ENCODE measurements at regions of chr12 and their contacts with region 1.

Region 1: DNA sequence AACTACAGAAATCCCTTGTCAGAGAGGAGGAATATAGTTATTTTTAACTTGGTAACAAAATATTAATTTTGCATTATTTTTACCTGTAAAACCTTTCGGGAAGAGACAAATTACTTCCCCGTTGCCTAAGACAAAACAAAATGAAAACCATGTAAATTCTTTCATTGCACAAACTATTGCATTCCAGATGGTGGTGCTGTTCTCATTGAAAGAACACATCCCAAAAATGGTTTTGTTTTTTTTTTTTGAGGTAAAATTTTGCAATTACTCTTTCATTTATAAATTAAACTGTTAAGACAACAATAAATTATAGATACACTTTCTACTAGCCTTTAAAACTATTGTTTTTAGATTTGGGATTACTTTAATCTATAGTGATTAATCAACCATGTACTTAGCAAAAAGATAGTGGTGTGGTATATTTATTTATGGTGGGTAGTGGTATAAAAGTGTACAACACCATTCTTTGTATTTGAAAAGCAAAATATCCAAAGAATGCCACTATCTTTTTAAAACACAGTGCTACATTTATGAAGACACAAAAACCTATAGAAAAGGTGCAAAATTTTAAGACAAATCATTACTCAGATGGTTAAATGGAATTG is 115.5 kb downstream of the SLC38A1 start:
- DNase-seq: no peak
- H3K4me3 ChIP-seq: peak overlapping the region in 26 of 59 donors; percentile 1 to 36 (median 16)
- H3K27ac ChIP-seq: peak overlapping the region in 40 of 59 donors; percentile 15 to 81 (median 61)
- H3K27me3 ChIP-seq: peaks cover 0 to 9% (median 0%) of the 10 kb centered on the region in 45 donors
- CTCF ChIP-seq: peak; percentile 49 to 76 (median 68)

Region 2: DNA sequence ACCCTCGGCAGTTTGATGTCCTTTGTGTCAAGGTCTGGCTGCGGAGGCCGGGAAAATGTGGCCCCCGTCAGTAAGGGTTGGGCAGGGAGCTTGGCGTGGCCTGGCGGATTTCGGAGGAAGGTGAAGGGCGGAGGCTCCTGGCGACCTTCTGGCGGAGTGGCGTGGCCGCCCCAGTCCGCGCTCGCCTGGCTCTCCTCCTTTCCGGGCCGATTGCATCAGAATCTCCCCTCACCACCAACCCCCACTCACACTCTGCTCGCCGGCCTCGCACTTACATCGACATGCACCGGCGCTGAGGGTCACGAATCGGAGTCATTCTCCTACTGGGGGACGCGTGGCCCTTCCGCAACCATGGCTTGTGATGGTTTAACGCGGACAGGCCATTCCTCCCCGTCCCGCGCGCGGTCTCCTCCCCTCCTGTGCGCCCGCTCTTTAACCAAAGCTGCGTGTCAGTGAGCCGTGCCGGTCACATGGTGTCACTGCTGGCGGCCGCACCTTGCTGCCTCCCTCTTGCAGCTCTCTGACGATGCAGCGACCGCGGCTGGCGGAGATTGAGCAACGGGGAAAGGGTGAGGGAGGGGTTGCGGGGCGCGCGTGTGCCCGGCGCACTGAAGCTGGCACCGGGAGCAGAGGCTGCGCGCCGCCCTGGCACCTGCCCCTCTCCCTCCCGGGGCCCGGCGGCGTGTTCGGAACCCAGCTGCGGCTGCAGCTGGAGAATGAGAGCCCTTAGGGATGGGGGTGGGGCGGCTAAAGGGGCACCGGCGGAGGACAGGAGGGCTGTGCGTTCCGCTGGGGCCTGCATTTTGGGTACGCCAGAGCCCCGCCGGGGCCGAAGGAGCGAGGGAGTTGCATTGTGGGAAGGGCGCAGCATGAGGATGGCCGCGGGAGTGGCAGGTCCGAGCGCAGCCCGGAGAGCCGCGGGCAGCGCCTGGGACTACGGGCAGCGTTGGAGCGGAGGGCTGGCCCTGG is 115.5 kb after region 1 on chr12 and contains the start of gene SLC38A1:
- intact Hi-C with region 1: loop called in 1 of 2 experiments (anchors 5 kb)
- DNase-seq: peak; percentile 56 to 90 (median 83)
- H3K4me3 ChIP-seq: peak within 1 kb of the TSS; percentile 53 to 89 (median 74)
- H3K27ac ChIP-seq: peak within 1 kb of the TSS in 58 of 59 donors; percentile 47 to 95 (median 84)
- H3K27me3 ChIP-seq: peaks cover 0 to 23% (median 0%) of the 10 kb centered on the region in 45 donors
- CTCF ChIP-seq: peak in 2 of 56 donors; percentile 7 to 27
- total RNA-seq, gene SLC38A1: 59.0 to 128 (median 90.2) TPM

Region 3: DNA sequence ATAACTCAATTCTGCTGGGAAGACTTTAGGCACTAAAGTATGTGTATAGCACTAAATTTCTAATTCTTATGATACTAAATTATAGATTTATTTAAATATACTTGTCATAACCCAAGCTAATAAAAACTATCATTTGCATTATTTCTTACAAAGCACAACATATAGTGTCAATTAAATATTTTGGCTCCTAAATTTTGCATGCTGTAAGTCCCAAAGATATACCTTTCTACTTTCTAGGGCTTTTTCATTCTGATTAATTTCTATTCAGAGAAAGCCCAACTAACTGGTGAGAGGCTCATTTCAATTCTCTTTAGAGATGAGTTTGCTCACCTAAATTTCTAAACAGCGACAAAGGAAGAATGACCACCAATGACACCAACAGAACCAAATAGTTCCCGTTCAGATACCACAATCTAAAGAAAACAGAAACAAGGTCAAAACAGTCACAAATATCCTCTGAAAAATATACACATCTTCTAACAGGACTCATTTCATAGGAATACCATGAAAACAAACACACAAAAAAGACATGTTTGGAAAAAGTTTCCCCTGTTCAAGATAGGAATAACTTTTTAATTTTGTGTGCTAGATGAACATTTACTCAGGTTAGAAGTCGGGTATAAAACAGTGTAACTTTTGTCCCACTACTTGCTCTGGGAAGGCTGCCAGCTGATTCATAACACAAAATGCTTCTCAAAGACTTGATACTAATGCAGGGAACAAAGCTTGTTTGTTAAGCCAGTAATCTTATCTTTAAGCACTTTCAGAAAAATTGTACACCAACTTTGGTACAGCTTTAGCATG is 211.6 kb after region 1 on chr12:
- intact Hi-C with region 1: loop called in 1 of 2 experiments (anchors 10 kb)
- DNase-seq: peak in 2 of 10 donors; percentile 18 to 68
- H3K4me3 ChIP-seq: peak overlapping the region in 36 of 59 donors; percentile 1 to 99 (median 22)
- H3K27ac ChIP-seq: peak overlapping the region in 45 of 59 donors; percentile 8 to 98 (median 47)
- H3K27me3 ChIP-seq: no peaks in the 10 kb centered on the region
- CTCF ChIP-seq: peak in 1 of 56 donors; percentile 14

Region 4: GRCh38 chr12:46382964-46383653 is 229.7 kb after region 1 on chr12:
- intact Hi-C with region 1: loop called in 1 of 2 experiments (anchors 10 kb)
- DNase-seq: peak; percentile 93 to 99 (median 95)
- H3K4me3 ChIP-seq: peak overlapping the region; percentile 51 to 93 (median 83)
- H3K27ac ChIP-seq: peak overlapping the region; percentile 92 to 100 (median 99)
- H3K27me3 ChIP-seq: no peaks in the 10 kb centered on the region
- CTCF ChIP-seq: peak in 45 of 56 donors; percentile 11 to 63 (median 36)

Measured in dorsolateral prefrontal cortex (tissue), 120 donors.